Natural killer cell (primary cell): ENCODE measurements at regions of chr3 and their contacts with region 1.

Region 1: GRCh38 chr3:150703299-150704134 is at the start of gene ERICH6:
- DNase-seq: peak; percentile 84 to 86
- ATAC-seq: peak; percentile 90 to 97 (median 91)
- H3K4me3 ChIP-seq: peak within 1 kb of the TSS; percentile 84
- H3K4me3 Mint-ChIP-seq: peak within 1 kb of the TSS; percentile 99
- H3K27ac ChIP-seq: peak within 1 kb of the TSS; percentile 96
- H3K27ac Mint-ChIP-seq: peak within 1 kb of the TSS; percentile 99 to 100
- H3K4me1 ChIP-seq: peaks cover 27% of the 10 kb centered on the region
- H3K4me1 Mint-ChIP-seq: peaks cover 25 to 34% of the 10 kb centered on the region in 2 donors
- H3K27me3 ChIP-seq: no peaks in the 10 kb centered on the region
- H3K27me3 Mint-ChIP-seq: no peaks in the 10 kb centered on the region
- CTCF ChIP-seq: no peak
- total RNA-seq, gene ERICH6: 0.35 to 3.7 (median 3.6) TPM

Region 2: DNA sequence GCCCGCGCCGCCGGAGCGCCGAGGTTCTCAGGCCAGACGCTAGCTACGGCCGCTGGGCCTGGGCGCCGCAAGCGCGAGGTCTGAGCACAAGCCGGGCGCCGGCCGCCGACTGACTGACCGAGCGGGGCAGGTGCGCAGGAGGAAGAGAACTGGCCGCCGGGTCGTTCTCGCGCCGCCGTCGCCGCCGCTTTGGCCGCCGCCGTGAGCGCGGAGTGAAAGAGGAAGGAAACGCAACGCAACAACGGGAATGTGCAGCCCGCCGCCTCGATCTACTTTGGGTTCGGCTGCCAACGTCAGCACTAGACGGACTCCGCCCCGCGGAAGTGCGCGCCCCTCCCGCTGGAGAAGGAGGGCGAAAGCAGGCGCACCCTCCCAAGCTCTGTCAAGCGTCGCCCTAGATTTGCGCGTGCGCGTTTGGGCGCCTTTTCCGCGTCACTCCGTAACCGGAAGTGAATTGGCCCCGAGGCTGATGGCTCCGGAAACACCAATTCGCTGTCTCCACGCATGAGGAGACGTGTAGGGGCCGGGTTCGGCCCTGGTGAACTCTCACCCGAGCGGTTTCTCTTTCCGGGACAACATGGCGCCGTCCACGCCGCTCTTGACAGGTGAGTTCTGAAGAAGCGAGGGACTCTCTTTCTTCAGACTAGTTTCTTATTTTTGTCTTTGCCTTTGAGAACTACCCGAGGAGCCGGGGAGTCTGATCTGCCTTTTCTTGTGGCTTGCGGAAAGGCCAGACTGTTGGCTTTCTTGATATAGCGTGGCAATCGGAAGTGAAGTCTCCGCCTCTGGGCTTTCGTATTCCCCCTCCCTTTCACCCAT is 157.1 kb before region 1 on chr3 and contains the starts of genes EIF2A and SERP1:
- intact Hi-C with region 1: loop called (anchors 1 kb)
- DNase-seq: peak; percentile 99 to 100
- ATAC-seq: peak; percentile 87 to 97 (median 88)
- H3K4me3 ChIP-seq: peak within 1 kb of the TSS; percentile 61
- H3K4me3 Mint-ChIP-seq: peak within 1 kb of the TSS; percentile 96
- H3K27ac ChIP-seq: peak within 1 kb of the TSS; percentile 87
- H3K27ac Mint-ChIP-seq: peak within 1 kb of the TSS; percentile 97
- H3K4me1 ChIP-seq: peaks cover 6% of the 10 kb centered on the region
- H3K4me1 Mint-ChIP-seq: peaks cover 61 to 69% of the 10 kb centered on the region in 2 donors
- H3K27me3 ChIP-seq: no peaks in the 10 kb centered on the region
- H3K27me3 Mint-ChIP-seq: no peaks in the 10 kb centered on the region
- CTCF ChIP-seq: no peak
- total RNA-seq, gene EIF2A: 102 to 124 (median 108) TPM
- total RNA-seq, gene SERP1: 91.1 to 106 (median 94.9) TPM

Region 3: DNA sequence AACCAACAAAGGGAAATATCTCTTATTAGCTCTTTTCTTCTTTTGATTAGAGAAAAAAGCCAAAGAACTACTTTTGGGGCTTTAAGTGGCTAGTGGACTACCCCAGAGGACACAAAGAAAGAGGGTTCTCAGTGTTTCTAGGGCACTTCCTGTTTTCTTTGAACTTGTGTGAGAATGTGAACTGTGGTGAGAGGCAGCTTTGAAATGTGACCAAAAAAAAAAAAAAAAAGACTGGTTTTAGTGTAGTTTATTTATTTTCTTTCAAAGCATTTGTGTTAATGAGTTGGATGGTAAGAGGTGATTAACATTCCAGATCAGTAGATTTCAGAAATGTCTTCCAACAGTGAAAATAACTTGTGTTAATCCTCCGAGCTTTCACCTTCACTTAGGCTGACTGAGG is 68.0 kb before region 1 on chr3:
- intact Hi-C with region 1: loop called (anchors 5 kb)
- DNase-seq: peak in 1 of 2 donors; percentile 64
- ATAC-seq: peak; percentile 92 to 95 (median 93)
- H3K4me3 ChIP-seq: no peak overlapping the region
- H3K4me3 Mint-ChIP-seq: peak overlapping the region; percentile 80
- H3K27ac ChIP-seq: peak overlapping the region; percentile 77
- H3K27ac Mint-ChIP-seq: peak overlapping the region; percentile 91 to 98
- H3K4me1 ChIP-seq: peaks cover 28% of the 10 kb centered on the region
- H3K4me1 Mint-ChIP-seq: peaks cover 44 to 45% of the 10 kb centered on the region in 2 donors
- H3K27me3 ChIP-seq: no peaks in the 10 kb centered on the region
- H3K27me3 Mint-ChIP-seq: no peaks in the 10 kb centered on the region
- CTCF ChIP-seq: no peak